Endothelial cell of umbilical vein (primary cell): ENCODE measurements at regions of chr5 and their contacts with region 1.

Region 1: GRCh38 chr5:88207575-88207974 is 61.1 kb downstream of the TMEM161B start:
- DNase-seq: no peak
- H3K4me3 ChIP-seq: no peak overlapping the region
- H3K27ac ChIP-seq: no peak overlapping the region
- H3K4me1 ChIP-seq: no peaks in the 10 kb centered on the region
- H3K27me3 ChIP-seq: no peaks in the 10 kb centered on the region
- CTCF ChIP-seq: no peak
- POLR2A ChIP-seq: no peak

Region 2: DNA sequence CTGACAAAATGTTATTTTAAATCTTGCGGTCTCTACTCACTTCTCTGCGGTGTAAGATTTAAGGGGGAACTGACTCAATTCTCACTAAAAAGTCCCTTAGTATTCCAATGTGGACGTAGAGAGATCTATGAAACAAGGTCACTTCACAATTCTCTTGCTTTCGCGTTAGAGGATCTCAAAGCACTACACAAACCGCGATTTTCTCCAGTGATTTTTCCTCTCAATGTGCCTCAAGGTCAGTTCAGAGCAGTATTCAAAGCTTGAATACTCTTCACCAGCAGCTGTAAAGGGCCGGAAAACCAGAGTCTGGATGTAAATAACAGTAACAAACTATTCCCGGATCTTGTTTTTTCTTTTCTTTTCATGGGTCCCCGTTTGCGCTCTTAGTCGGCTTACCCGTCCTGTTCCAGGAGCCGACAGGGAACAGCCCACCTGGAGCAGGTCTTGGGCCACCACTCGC is 67.1 kb before region 1 on chr5:
- CTCF ChIA-PET with region 1: no interaction called
- POLR2A ChIA-PET with region 1: no interaction called
- dilution Hi-C with region 1: no loop called
- intact Hi-C with region 1: no loop called
- DNase-seq: no peak
- H3K4me3 ChIP-seq: peak overlapping the region in 1 of 3 experiments; percentile 75
- H3K27ac ChIP-seq: no peak overlapping the region
- H3K4me1 ChIP-seq: peaks cover 12% of the 10 kb centered on the region
- H3K27me3 ChIP-seq: peaks cover 51 to 71% of the 10 kb centered on the region in 2 experiments
- CTCF ChIP-seq: no peak
- POLR2A ChIP-seq: no peak

Region 3: GRCh38 chr5:88193894-88194293 is 13.7 kb before region 1 on chr5:
- CTCF ChIA-PET with region 1: interaction called, 10 read pairs
- POLR2A ChIA-PET with region 1: no interaction called
- dilution Hi-C with region 1: no loop called
- intact Hi-C with region 1: no loop called
- DNase-seq: no peak
- H3K4me3 ChIP-seq: no peak overlapping the region
- H3K27ac ChIP-seq: no peak overlapping the region
- H3K4me1 ChIP-seq: no peaks in the 10 kb centered on the region
- H3K27me3 ChIP-seq: no peaks in the 10 kb centered on the region
- CTCF ChIP-seq: no peak
- POLR2A ChIP-seq: no peak

Region 4: GRCh38 chr5:88660947-88661805 is 453.6 kb after region 1 on chr5:
- CTCF ChIA-PET with region 1: no interaction called
- POLR2A ChIA-PET with region 1: no interaction called
- dilution Hi-C with region 1: no loop called
- intact Hi-C with region 1: no loop called
- DNase-seq: peak; percentile 51
- H3K4me3 ChIP-seq: peak overlapping the region in 2 of 3 experiments; percentile 19 to 34
- H3K27ac ChIP-seq: no peak overlapping the region
- H3K4me1 ChIP-seq: peaks cover 5% of the 10 kb centered on the region
- H3K27me3 ChIP-seq: peaks cover 60 to 97% of the 10 kb centered on the region in 2 experiments
- CTCF ChIP-seq: no peak
- POLR2A ChIP-seq: no peak